Heart left ventricle (tissue), 16 donors: ENCODE measurements at regions of chr21 and their contacts with region 1.

Region 1: DNA sequence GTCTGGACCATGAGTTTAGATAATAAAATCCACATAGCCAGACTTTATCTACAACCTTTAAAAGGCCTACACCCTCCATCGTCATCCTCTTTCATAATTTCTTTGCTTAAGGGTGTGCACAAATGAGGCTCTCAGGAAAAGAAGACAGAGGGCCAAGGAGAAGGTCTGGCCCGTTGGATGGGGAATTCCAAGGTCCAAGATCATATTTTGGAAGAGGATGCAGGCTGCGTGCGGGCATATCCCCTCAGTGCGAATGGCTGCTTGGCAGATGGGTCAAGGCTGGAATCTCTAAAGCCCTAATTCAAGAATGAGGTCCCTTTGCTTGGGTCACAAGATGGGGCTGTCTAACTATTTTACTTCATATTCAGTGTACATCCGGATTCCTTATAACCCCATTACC is 782.2 kb upstream of the NCAM2 start:
- DNase-seq: no peak
- ATAC-seq: no peak
- H3K4me3 ChIP-seq: no peak overlapping the region
- H3K27ac ChIP-seq: no peak overlapping the region
- H3K4me1 ChIP-seq: no peaks in the 10 kb centered on the region
- H3K27me3 ChIP-seq: no peaks in the 10 kb centered on the region
- CTCF ChIP-seq: no peak
- POLR2A ChIP-seq: no peak

Region 2: GRCh38 chr21:20163167-20163566 is 52.8 kb before region 1 on chr21:
- intact Hi-C with region 1: loop called in 1 of 10 experiments (anchors 5 kb)
- DNase-seq: no peak
- ATAC-seq: no peak
- H3K4me3 ChIP-seq: no peak overlapping the region
- H3K27ac ChIP-seq: no peak overlapping the region
- H3K4me1 ChIP-seq: no peaks in the 10 kb centered on the region
- H3K27me3 ChIP-seq: no peaks in the 10 kb centered on the region
- CTCF ChIP-seq: no peak
- POLR2A ChIP-seq: no peak